ENCODE measurements at regions of chr22 and their contacts with region 1.

Region 1: GRCh38 chr22:45645526-45646414 is 25.9 kb upstream of the ATXN10 start:
- DNase-seq: peak; percentile 93
- H3K4me3 ChIP-seq: peak overlapping the region in 1 of 8 donors; percentile 40
- H3K27ac ChIP-seq: no peak overlapping the region
- H3K4me1 ChIP-seq: peaks cover 5 to 13% (median 10%) of the 10 kb centered on the region in 6 donors
- H3K27me3 ChIP-seq: peaks cover 0 to 86% (median 22%) of the 10 kb centered on the region in 7 donors
- CTCF ChIP-seq: peak; percentile 76 to 98 (median 96)
- POLR2A ChIP-seq: no peak

Region 2: DNA sequence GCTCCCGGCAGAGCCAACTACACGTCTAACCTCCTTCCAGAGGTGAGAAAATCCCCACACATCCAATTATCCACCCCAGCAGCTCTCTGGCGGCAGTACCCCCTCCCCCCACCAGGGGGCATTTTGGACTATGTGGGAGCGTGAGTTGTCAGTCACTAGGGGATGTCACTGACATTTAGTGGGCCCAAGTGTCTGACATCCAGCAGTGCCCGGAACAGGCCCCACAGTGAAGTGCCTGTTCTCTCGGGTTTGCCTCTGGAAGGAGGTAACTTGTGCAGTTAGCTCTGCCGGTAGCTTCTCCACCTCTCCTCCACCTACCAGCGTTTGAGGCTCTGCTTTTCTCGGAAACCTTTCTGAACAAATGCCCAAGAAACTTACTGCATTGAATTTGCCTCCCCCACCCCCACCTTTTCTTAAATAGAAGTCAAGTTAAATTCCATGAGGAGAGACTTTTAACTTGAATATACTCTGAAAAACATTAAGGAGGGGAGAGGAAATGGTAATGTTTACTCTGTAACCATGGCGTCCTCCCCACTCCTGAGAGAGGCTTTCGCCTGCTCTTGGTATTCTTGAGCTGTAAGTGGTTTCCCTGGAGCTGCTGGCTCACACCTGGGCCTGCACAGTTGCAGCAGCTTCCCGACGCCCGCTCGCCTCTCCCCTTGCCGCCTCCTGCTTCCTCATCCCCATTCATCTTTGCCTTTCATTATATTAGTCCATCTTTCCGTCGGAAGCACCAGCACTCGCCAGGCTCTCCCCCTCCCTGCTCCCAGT is 218.4 kb after region 1 on chr22:
- intact Hi-C with region 1: loop called (anchors 10 kb)
- DNase-seq: peak; percentile 85
- H3K4me3 ChIP-seq: no peak overlapping the region
- H3K27ac ChIP-seq: no peak overlapping the region
- H3K4me1 ChIP-seq: peaks cover 4 to 30% (median 17%) of the 10 kb centered on the region in 6 donors
- H3K27me3 ChIP-seq: peaks cover 0 to 63% (median 40%) of the 10 kb centered on the region in 7 donors
- CTCF ChIP-seq: peak; percentile 70 to 92 (median 88)
- POLR2A ChIP-seq: no peak

Measured in spleen (tissue), 13 donors.